Activated CD4-positive, alpha-beta memory T cell treated with anti-CD3 and anti-CD28 coated beads for 36 hours (primary cell): ENCODE measurements at regions of chr12 and their contacts with region 1.

Region 1: GRCh38 chr12:49636979-49637755 is 13.8 kb downstream of the PRPF40B start:
- DNase-seq: peak; percentile 70
- H3K4me3 Mint-ChIP-seq: no peak overlapping the region
- H3K27ac Mint-ChIP-seq: peak overlapping the region; percentile 7
- H3K4me1 Mint-ChIP-seq: peaks cover 6% of the 10 kb centered on the region
- H3K27me3 Mint-ChIP-seq: no peaks in the 10 kb centered on the region

Region 2: DNA sequence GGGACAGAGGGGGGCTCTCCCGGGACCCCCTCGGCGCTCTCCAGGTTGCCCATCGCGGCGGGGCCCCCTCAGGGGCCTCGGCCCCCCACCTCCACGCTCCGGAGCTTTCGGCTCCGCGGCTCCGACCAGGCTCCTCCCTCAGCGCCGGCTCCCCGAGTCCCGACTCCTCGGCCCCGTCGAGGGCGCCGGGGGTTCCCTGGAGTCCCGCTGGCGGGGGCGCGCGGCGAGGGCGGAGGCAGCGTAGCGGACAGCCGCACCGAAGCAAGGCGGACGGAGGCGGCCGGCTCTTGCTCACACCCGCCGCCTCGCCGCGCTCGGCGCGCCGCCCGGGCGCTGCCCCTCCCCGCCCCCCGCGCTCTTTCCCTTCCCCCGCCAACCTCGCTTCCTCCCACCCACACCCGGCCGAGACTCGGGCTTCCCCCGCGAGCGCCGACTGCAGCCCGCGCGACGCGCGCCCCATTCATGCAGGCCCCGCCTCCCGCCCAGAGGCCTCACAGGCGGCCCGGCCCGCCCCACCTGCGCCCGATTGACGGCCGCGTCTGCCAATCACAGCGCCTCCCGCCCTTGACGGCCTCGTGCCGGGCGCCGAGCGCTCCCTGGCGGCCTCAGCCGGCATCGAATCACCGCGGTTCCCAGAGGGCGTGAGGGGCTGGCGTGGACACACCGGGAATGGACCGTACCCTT is 70.1 kb after region 1 on chr12 and contains the start of gene FMNL3:
- CTCF ChIA-PET with region 1: interaction called, 281 read pairs
- POLR2A ChIA-PET with region 1: interaction called, 3 read pairs
- intact Hi-C with region 1: loop called (anchors 1 kb)
- DNase-seq: peak; percentile 98
- H3K4me3 Mint-ChIP-seq: peak within 1 kb of the TSS; percentile 85
- H3K27ac Mint-ChIP-seq: peak within 1 kb of the TSS; percentile 72
- H3K4me1 Mint-ChIP-seq: peaks cover 43% of the 10 kb centered on the region
- H3K27me3 Mint-ChIP-seq: peaks cover 3% of the 10 kb centered on the region
- total RNA-seq, gene FMNL3: 31.2 to 31.9 TPM

Region 3: GRCh38 chr12:49763006-49763591 is 125.9 kb after region 1 on chr12:
- CTCF ChIA-PET with region 1: interaction called, 11 read pairs
- POLR2A ChIA-PET with region 1: interaction called, 3 read pairs
- intact Hi-C with region 1: no loop called
- DNase-seq: peak; percentile 89
- H3K4me3 Mint-ChIP-seq: peak overlapping the region; percentile 49
- H3K27ac Mint-ChIP-seq: peak overlapping the region; percentile 95
- H3K4me1 Mint-ChIP-seq: peaks cover 59% of the 10 kb centered on the region
- H3K27me3 Mint-ChIP-seq: no peaks in the 10 kb centered on the region

Region 4: DNA sequence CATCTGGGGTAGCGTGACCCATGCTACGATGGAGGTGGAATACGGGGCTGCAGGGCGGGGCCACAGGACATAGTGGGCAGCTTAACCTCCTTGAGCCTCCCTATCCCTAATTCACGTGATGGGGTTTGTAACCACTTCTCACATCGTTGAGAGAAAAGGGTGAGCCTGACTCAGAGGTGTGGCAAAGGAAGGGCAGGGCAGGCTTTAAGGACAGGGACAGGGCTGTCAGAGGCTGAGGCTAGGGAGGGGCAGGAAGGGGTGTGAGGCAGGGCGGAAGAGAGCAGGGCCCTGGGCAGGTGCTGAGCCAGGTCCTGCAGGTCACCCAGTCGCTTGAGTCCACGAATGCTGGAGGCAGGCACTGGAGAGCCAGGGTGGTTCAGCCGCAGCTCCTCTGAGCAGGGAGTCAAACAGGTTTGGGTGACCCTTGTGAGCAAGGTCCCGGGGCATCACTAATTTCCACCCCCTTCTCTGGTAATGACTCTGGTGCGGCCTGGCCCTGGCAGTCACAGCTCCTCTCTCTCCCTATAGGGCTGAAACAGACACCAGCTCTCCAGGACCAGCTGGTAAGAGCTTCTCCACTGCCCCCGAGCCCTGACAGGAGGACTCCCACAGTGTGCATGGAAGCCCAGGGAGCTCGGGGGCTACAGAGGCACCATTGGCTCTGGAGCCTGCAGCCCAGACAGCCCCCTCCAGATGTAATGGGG is 305.9 kb after region 1 on chr12:
- CTCF ChIA-PET with region 1: no interaction called
- POLR2A ChIA-PET with region 1: no interaction called
- intact Hi-C with region 1: no loop called
- DNase-seq: peak; percentile 46
- H3K4me3 Mint-ChIP-seq: no peak overlapping the region
- H3K27ac Mint-ChIP-seq: no peak overlapping the region
- H3K4me1 Mint-ChIP-seq: peaks cover 33% of the 10 kb centered on the region
- H3K27me3 Mint-ChIP-seq: no peaks in the 10 kb centered on the region